HEK293 (cell line): ENCODE measurements at regions of chr18 and their contacts with region 1.

Region 1: GRCh38 chr18:46073474-46074331 is 1.6 kb upstream of the PSTPIP2 start:
- H3K4me3 ChIP-seq: no peak overlapping the region
- H3K27ac ChIP-seq: no peak overlapping the region
- H3K4me1 ChIP-seq: no peaks in the 10 kb centered on the region
- CTCF ChIP-seq: peak; percentile 21; the same call in 1 of the 2 replicates

Region 2: GRCh38 chr18:45664824-45665763 is 408.6 kb before region 1 on chr18:
- CTCF ChIA-PET with region 1: interaction called, 48 read pairs
- POLR2A ChIA-PET with region 1: no interaction called
- H3K4me3 ChIP-seq: no peak overlapping the region
- H3K27ac ChIP-seq: no peak overlapping the region
- H3K4me1 ChIP-seq: peaks cover 2% of the 10 kb centered on the region; the same call in 1 of the 2 replicates
- CTCF ChIP-seq: peak; percentile 76

Region 3: GRCh38 chr18:45690975-45691815 is 382.5 kb before region 1 on chr18:
- CTCF ChIA-PET with region 1: interaction called, 12 read pairs
- POLR2A ChIA-PET with region 1: no interaction called
- H3K4me3 ChIP-seq: no peak overlapping the region
- H3K27ac ChIP-seq: no peak overlapping the region
- H3K4me1 ChIP-seq: no peaks in the 10 kb centered on the region
- CTCF ChIP-seq: peak; percentile 90

Region 4: GRCh38 chr18:45730832-45731575 is 342.7 kb before region 1 on chr18:
- CTCF ChIA-PET with region 1: interaction called, 11 read pairs
- POLR2A ChIA-PET with region 1: no interaction called
- H3K4me3 ChIP-seq: no peak overlapping the region
- H3K27ac ChIP-seq: no peak overlapping the region
- H3K4me1 ChIP-seq: no peaks in the 10 kb centered on the region
- CTCF ChIP-seq: no peak

Region 5: GRCh38 chr18:46042571-46043123 is 31.1 kb before region 1 on chr18:
- CTCF ChIA-PET with region 1: interaction called, 10 read pairs
- POLR2A ChIA-PET with region 1: no interaction called
- H3K4me3 ChIP-seq: no peak overlapping the region
- H3K27ac ChIP-seq: no peak overlapping the region
- H3K4me1 ChIP-seq: no peaks in the 10 kb centered on the region
- CTCF ChIP-seq: no peak